ENCODE measurements at regions of chr15 and their contacts with region 1.

Region 1: GRCh38 chr15:91706322-91707032 is 147.0 kb upstream of the SLCO3A1 start:
- DNase-seq: peak; percentile 97
- H3K4me3 Mint-ChIP-seq: no peak overlapping the region
- H3K27ac Mint-ChIP-seq: peak overlapping the region; percentile 89
- H3K4me1 Mint-ChIP-seq: peaks cover 42% of the 10 kb centered on the region
- H3K27me3 Mint-ChIP-seq: peaks cover 18% of the 10 kb centered on the region

Region 2: DNA sequence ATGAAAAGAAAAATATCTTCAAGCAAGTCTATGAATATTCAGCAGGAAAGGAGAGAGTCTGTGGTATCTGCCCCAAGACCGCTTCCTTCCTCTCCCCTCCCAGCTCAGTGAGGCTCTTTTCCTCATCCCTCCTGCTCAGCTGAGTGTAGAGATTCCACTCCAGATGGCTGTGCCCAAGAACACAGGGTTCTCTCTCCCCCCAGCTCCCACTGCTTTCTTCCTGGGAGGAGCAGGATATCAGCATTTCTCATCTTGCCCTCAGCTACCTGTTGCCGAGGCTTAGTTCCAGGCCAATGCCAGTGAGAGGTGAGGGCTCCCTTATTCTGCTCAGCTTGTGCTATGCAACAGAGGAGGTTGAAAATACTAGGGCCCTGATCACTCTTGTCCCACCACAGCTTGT is 394.5 kb before region 1 on chr15:
- CTCF ChIA-PET with region 1: interaction called, 11 read pairs
- DNase-seq: peak; percentile 73
- H3K4me3 Mint-ChIP-seq: peak overlapping the region; percentile 60
- H3K27ac Mint-ChIP-seq: peak overlapping the region; percentile 92
- H3K4me1 Mint-ChIP-seq: peaks cover 86% of the 10 kb centered on the region
- H3K27me3 Mint-ChIP-seq: peaks cover 10% of the 10 kb centered on the region

Region 3: DNA sequence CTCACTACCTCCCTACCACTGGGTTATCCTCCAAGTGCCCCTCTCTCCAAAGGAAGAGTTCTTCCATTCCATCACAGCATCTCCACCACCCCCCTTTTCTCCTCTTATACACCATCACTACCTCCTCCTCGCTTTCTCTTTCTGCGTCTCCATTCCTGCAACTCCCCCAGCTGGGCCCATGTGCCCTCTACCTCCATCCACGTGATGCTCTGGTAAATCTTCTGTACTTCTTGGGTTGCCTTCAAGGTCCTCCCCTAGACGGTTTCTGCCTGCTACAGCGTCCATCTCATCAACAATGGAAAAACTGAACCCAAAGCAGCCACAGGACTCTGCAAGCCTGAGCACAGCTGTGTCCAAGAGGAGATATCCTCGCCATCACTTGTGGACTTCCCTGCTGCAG is 17.5 kb after region 1 on chr15:
- CTCF ChIA-PET with region 1: interaction called, 20 read pairs
- DNase-seq: no peak
- H3K4me3 Mint-ChIP-seq: no peak overlapping the region
- H3K27ac Mint-ChIP-seq: no peak overlapping the region
- H3K4me1 Mint-ChIP-seq: no peaks in the 10 kb centered on the region
- H3K27me3 Mint-ChIP-seq: peaks cover 44% of the 10 kb centered on the region

Region 4: DNA sequence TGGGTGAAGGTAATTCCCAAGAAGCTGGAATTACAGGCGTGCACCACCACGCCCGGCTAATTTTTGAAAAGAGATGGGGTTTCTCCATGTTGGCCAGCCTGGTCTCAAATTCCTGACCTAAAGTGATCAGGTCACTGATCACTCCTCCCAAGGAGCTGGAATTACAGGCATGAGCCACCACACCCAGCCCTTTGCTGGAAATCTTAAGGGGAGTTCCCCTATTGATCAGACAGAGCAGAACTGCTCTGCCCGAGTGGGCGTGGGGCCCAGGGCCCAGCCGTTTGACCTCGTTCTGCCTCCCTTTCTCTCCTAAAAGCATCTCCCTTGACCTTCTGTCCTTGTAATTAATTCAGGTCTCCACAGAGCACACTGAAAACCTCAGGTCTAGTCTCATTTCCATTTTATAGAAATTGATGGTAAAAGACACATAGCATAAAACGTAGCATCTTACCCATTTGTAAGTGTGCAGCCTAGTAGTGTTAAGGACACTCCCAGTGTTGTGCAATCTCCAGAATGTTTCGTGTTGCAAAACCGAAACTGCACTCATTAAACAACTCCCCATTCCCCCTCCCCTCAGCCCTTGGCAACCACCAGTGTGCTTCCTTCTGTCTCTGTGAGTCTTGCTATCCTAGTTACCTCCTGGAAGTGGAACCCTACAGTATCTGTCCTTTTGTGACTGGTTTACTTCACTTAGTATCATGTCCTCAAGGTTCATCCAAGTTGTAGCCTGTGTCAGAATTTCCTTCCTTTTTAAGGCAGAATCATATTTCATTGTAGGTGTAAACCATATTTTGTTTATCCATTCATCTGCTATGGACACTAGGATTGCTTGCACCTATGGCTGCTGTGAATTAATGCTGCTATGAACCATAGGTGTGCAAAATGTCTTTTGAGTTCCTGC is 236.4 kb after region 1 on chr15:
- CTCF ChIA-PET with region 1: interaction called, 10 read pairs
- DNase-seq: peak; percentile 71
- H3K4me3 Mint-ChIP-seq: no peak overlapping the region
- H3K27ac Mint-ChIP-seq: no peak overlapping the region
- H3K4me1 Mint-ChIP-seq: peaks cover 35% of the 10 kb centered on the region
- H3K27me3 Mint-ChIP-seq: no peaks in the 10 kb centered on the region

Region 5: GRCh38 chr15:92083190-92083589 is 376.7 kb after region 1 on chr15:
- CTCF ChIA-PET with region 1: interaction called, 36 read pairs
- DNase-seq: no peak
- H3K4me3 Mint-ChIP-seq: no peak overlapping the region
- H3K27ac Mint-ChIP-seq: no peak overlapping the region
- H3K4me1 Mint-ChIP-seq: no peaks in the 10 kb centered on the region
- H3K27me3 Mint-ChIP-seq: no peaks in the 10 kb centered on the region